ENCODE measurements at regions of chr20 and their contacts with region 1.

Region 1: DNA sequence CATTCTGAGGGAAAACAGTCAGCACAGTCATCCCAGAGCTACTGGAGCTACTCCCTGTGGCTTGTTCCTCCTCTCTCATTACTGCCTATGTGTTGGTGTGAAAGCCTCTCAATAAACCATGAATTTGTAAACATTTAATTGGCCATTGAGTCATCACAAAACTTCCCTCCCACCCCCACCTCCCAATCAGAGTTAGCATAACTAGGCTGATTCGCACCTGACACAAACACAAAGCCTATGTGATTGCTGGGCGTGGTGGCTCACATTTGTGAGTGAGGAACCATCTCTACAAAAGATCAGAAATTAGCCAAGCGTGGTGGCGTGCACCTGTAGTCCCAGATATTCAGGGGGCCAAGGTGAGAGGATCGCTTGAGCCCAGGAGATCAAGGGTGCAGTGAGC is 17.1 kb upstream of the SNTA1 start:
- DNase-seq: no peak
- H3K4me3 ChIP-seq: no peak overlapping the region
- H3K4me3 Mint-ChIP-seq: no peak overlapping the region
- H3K27ac ChIP-seq: no peak overlapping the region
- H3K27ac Mint-ChIP-seq: no peak overlapping the region
- H3K4me1 ChIP-seq: no peaks in the 10 kb centered on the region
- H3K4me1 Mint-ChIP-seq: no peaks in the 10 kb centered on the region
- H3K27me3 ChIP-seq: no peaks in the 10 kb centered on the region
- H3K27me3 Mint-ChIP-seq: no peaks in the 10 kb centered on the region

Region 2: GRCh38 chr20:33423141-33423834 is 37.4 kb before region 1 on chr20:
- CTCF ChIA-PET with region 1: no interaction called
- POLR2A ChIA-PET with region 1: no interaction called
- DNase-seq: no peak
- H3K4me3 ChIP-seq: no peak overlapping the region
- H3K4me3 Mint-ChIP-seq: no peak overlapping the region
- H3K27ac ChIP-seq: peak overlapping the region; percentile 18
- H3K27ac Mint-ChIP-seq: peak overlapping the region in 1 of 8 donors; percentile 78
- H3K4me1 ChIP-seq: no peaks in the 10 kb centered on the region
- H3K4me1 Mint-ChIP-seq: no peaks in the 10 kb centered on the region
- H3K27me3 ChIP-seq: no peaks in the 10 kb centered on the region
- H3K27me3 Mint-ChIP-seq: no peaks in the 10 kb centered on the region

Region 3: GRCh38 chr20:33506576-33506975 is 45.9 kb after region 1 on chr20:
- CTCF ChIA-PET with region 1: no interaction called
- POLR2A ChIA-PET with region 1: no interaction called
- DNase-seq: no peak
- H3K4me3 ChIP-seq: no peak overlapping the region
- H3K4me3 Mint-ChIP-seq: no peak overlapping the region
- H3K27ac ChIP-seq: no peak overlapping the region
- H3K27ac Mint-ChIP-seq: no peak overlapping the region
- H3K4me1 ChIP-seq: no peaks in the 10 kb centered on the region
- H3K4me1 Mint-ChIP-seq: peaks cover 22 to 50% (median 39%) of the 10 kb centered on the region in 3 donors
- H3K27me3 ChIP-seq: no peaks in the 10 kb centered on the region
- H3K27me3 Mint-ChIP-seq: no peaks in the 10 kb centered on the region

Region 4: GRCh38 chr20:33653218-33653899 is 192.6 kb after region 1 on chr20:
- CTCF ChIA-PET with region 1: interaction called, 11 read pairs
- POLR2A ChIA-PET with region 1: interaction called, 4 read pairs
- DNase-seq: peak in 4 of 5 donors; percentile 20 to 70 (median 34)
- H3K4me3 ChIP-seq: no peak overlapping the region
- H3K4me3 Mint-ChIP-seq: no peak overlapping the region
- H3K27ac ChIP-seq: no peak overlapping the region
- H3K27ac Mint-ChIP-seq: peak overlapping the region in 2 of 8 donors; percentile 72 to 91
- H3K4me1 ChIP-seq: no peaks in the 10 kb centered on the region
- H3K4me1 Mint-ChIP-seq: peaks cover 10 to 25% (median 12%) of the 10 kb centered on the region in 3 donors
- H3K27me3 ChIP-seq: no peaks in the 10 kb centered on the region
- H3K27me3 Mint-ChIP-seq: peaks cover 0 to 1% of the 10 kb centered on the region in 2 donors

Measured in CD8-positive, alpha-beta memory T cell (primary cell).